ENCODE measurements at regions of chr2 and their contacts with region 1.

Region 1: GRCh38 chr2:217105733-217106649 is 246.1 kb upstream of the TNP1 start:
- DNase-seq: peak; percentile 80 to 88
- ATAC-seq: peak; percentile 76
- H3K4me3 ChIP-seq: no peak overlapping the region
- H3K27ac ChIP-seq: peak overlapping the region; percentile 95 to 99
- H3K4me1 ChIP-seq: peaks cover 0 to 5% of the 10 kb centered on the region in 2 donors
- H3K27me3 ChIP-seq: no peaks in the 10 kb centered on the region

Region 2: DNA sequence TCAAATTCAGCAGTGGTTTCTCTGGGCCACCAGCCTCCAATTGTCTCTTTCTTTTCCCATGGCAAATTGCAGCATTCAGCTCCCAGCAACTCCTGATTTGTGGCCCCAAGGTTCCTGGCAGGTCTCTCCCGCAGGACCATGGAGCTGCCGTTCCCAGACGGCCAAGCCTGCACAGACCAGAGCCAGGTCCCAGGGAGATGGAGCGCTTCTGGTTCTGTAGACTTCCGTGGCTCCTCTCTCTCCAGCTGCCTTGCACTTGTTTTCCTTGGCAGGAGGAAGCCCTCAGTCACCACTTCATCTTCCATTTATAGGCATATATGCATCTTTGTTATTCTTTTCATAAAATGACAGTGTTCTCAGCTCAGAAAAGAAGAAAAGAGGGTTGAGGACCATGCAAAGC is 267.8 kb before region 1 on chr2:
- intact Hi-C with region 1: loop called in 1 of 2 experiments (anchors 10 kb)
- DNase-seq: peak; percentile 73 to 81
- ATAC-seq: peak; percentile 74
- H3K4me3 ChIP-seq: no peak overlapping the region
- H3K27ac ChIP-seq: peak overlapping the region; percentile 19 to 53
- H3K4me1 ChIP-seq: peaks cover 0 to 4% of the 10 kb centered on the region in 2 donors
- H3K27me3 ChIP-seq: no peaks in the 10 kb centered on the region

Region 3: DNA sequence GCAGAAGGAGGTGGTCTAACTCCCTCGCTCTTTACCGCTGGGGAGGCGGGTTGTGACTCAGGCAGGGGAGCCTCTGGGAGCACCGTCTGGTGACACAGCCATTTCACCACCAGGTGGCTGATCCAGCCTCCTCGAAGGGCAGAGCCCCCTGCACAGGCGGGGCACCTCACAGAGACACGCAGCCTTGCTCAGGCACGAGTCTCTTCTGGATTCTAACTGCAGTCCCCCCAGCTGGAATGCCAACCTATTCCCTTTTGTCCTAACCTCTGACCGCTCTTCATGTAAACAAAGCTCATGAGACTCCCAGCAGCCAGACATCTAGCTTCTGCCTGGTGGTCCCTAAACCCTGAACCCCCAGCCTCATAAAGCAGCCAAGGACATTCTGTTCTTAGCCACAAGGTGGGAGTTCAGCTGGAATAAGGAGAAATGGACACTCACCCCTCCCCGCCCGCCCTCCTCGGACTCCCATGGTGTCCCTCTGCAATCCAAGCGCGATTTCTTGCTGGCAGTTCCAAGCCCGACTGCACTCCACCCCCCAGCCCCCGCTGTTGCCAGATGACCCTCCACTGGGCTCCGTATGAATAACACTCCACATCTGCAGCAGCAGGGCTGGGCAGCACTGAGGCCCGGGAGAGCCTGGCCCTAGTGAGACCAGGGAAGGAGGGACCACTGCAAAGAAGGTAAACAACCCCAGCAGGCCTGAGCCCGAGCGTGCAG is 812.5 kb after region 1 on chr2:
- intact Hi-C with region 1: loop called in 1 of 2 experiments (anchors 10 kb)
- DNase-seq: peak; percentile 78 to 86
- ATAC-seq: peak; percentile 1
- H3K4me3 ChIP-seq: no peak overlapping the region
- H3K27ac ChIP-seq: peak overlapping the region; percentile 90 to 94
- H3K4me1 ChIP-seq: peaks cover 1 to 6% of the 10 kb centered on the region in 2 donors
- H3K27me3 ChIP-seq: no peaks in the 10 kb centered on the region

Measured in aorta (tissue), 5 donors.